ENCODE measurements at regions of chr7 and their contacts with region 1.

Region 1: DNA sequence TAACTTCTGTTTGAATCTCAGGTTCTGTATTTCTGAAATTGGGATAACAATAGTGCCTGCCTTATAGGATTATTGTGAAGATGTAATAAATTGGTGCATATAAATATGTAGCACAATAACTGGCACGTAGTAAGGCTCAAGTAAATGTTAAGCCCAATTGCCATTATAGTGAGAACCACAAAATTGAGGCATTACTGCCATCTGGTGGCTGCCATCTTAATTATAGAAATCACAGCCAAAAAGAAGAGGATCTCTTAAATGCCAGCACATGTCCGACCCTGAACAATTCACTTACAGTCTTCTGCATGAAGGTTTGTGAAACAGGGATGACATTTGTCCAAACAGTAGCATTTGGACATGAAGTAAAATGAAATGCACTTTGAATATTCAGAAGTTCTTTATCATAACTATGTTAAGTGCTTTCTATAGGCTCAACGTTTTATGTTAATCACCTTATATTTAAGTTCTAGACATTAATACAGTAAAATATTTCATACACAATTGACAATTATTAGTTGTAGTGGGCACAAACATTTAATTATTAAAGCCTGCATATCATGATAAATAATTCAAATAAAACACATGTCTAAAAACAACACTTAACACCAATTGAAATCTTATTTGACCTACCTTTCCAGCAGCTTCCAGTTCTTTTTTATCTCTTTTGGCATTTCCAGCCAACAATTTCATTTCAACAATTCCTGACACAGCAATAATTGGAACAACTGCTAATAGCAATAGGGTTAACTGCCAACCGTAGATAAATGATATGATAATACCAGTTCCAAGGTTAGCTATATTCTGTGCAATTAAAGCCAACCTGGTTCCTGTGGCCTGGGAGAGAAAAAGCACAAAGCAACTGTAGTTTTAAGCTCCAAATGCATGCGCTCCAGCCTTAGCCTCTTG is 58.5 kb downstream of the ABCB4 start:
- DNase-seq: peak; percentile 66
- H3K4me3 Mint-ChIP-seq: no peak overlapping the region
- H3K27ac Mint-ChIP-seq: no peak overlapping the region
- H3K4me1 Mint-ChIP-seq: no peaks in the 10 kb centered on the region
- H3K27me3 Mint-ChIP-seq: peaks cover 10% of the 10 kb centered on the region

Region 2: GRCh38 chr7:87252166-87252565 is 164.8 kb before region 1 on chr7:
- CTCF ChIA-PET with region 1: no interaction called
- POLR2A ChIA-PET with region 1: no interaction called
- DNase-seq: no peak
- H3K4me3 Mint-ChIP-seq: no peak overlapping the region
- H3K27ac Mint-ChIP-seq: no peak overlapping the region
- H3K4me1 Mint-ChIP-seq: no peaks in the 10 kb centered on the region
- H3K27me3 Mint-ChIP-seq: peaks cover 9% of the 10 kb centered on the region

Region 3: DNA sequence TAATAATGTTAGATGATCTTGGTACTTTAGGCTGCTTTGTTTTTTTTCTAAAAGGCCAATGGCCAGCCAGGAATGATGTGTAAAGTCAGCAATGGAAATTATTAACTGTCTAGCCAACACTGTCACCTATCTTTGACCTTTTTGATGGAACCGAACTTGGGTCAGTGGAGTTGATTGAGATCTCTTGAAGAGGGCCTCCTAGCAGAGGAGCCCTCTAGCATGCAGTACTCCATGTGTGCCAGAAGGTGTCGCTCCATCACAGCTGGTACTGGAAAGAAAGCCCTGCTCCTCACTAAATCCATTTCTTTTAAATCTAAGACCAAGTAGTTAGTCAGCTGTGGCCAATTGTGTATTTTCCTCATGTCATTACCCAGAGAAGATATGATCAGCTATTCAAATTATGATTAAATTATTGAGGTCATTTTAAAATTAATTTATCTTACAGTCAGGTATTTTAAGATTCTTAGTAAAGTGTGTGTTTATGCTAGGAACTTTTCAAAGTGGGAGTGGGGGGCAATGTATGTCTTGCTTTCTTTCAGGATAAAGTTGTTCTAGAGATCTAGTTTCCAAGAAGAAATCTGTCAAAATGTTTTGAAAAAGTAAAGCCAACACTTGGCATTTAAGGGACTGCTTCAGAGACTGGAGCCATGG is 104.6 kb before region 1 on chr7:
- CTCF ChIA-PET with region 1: interaction called, 125 read pairs
- POLR2A ChIA-PET with region 1: no interaction called
- DNase-seq: peak; percentile 54
- H3K4me3 Mint-ChIP-seq: no peak overlapping the region
- H3K27ac Mint-ChIP-seq: no peak overlapping the region
- H3K4me1 Mint-ChIP-seq: no peaks in the 10 kb centered on the region
- H3K27me3 Mint-ChIP-seq: no peaks in the 10 kb centered on the region

Measured in activated CD4-positive, alpha-beta memory T cell treated with anti-CD3 and anti-CD28 coated beads, Interleukin-2, amount 10 ng/mL, durations not matched to agents 7 days and 5 days (primary cell).